PC-3 (cell line): ENCODE measurements at regions of chr10 and their contacts with region 1.

Region 1: GRCh38 chr10:103244663-103245271 is 920 bp upstream of the RPEL1 start:
- DNase-seq: peak; percentile 82
- ATAC-seq: peak; percentile 14; the same call in 1 of the 2 replicates
- H3K4me3 ChIP-seq: no peak overlapping the region
- H3K27ac ChIP-seq: no peak overlapping the region
- H3K4me1 ChIP-seq: peaks cover 26% of the 10 kb centered on the region
- H3K27me3 ChIP-seq: no peaks in the 10 kb centered on the region
- CTCF ChIP-seq: peak; percentile 86

Region 2: GRCh38 chr10:103080891-103081581 is 163.7 kb before region 1 on chr10:
- CTCF ChIA-PET with region 1: no interaction called
- POLR2A ChIA-PET with region 1: no interaction called
- intact Hi-C with region 1: loop called (anchors 5 kb)
- DNase-seq: peak; percentile 11
- ATAC-seq: peak; percentile 28; the same call in 1 of the 2 replicates
- H3K4me3 ChIP-seq: no peak overlapping the region
- H3K27ac ChIP-seq: no peak overlapping the region
- H3K4me1 ChIP-seq: no peaks in the 10 kb centered on the region
- H3K27me3 ChIP-seq: no peaks in the 10 kb centered on the region
- CTCF ChIP-seq: no peak

Region 3: GRCh38 chr10:103168486-103169311 is 76.1 kb before region 1 on chr10:
- CTCF ChIA-PET with region 1: interaction called, 8 read pairs
- POLR2A ChIA-PET with region 1: interaction called, 18 read pairs
- intact Hi-C with region 1: loop called (anchors 2 kb)
- DNase-seq: peak; percentile 81
- ATAC-seq: peak; percentile 94
- H3K4me3 ChIP-seq: peak overlapping the region; percentile 32; the same call in 1 of the 2 replicates
- H3K27ac ChIP-seq: peak overlapping the region; percentile 75
- H3K4me1 ChIP-seq: peaks cover 40% of the 10 kb centered on the region
- H3K27me3 ChIP-seq: no peaks in the 10 kb centered on the region
- CTCF ChIP-seq: no peak

Region 4: DNA sequence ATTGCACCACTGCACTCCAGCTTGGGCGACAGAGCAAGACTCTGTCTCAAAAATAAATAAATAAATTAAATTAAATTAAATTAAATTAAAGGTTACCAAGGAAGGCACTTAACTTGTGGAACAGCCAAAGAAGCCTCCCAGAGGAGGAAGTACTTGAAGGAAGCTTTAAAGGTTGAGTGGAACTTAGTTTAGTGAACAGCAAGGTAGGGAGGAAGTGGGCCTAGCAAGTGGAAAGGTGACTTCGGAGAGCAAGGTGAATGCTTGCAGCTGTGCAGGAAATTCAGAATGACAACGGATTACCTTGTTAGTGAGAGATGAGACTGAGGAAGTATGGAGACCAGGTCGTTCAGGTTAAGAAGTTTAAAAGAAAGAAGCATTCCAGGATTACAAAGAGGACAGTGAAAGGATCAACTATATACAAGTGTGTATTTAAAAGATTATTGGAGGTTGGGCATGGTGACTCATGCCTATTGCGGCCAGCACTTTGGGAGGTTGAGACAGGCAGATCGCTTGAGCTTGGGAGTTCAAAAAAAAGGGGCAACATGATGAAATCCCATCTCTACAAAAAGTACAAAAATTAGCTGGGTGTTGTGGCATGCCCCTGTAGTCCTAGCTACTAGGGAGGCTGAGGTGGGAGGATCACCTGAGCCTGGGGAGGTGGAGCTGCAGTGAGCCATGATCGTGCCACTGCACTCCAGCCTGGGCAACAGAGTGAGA is 11.8 kb before region 1 on chr10:
- CTCF ChIA-PET with region 1: no interaction called
- POLR2A ChIA-PET with region 1: interaction called, 7 read pairs
- intact Hi-C with region 1: loop called (anchors 1 kb)
- DNase-seq: peak; percentile 89
- ATAC-seq: peak; percentile 60
- H3K4me3 ChIP-seq: no peak overlapping the region
- H3K27ac ChIP-seq: peak overlapping the region; percentile 88
- H3K4me1 ChIP-seq: peaks cover 43% of the 10 kb centered on the region
- H3K27me3 ChIP-seq: no peaks in the 10 kb centered on the region
- CTCF ChIP-seq: no peak

Region 5: GRCh38 chr10:103262229-103262628 is 17.5 kb after region 1 on chr10:
- CTCF ChIA-PET with region 1: no interaction called
- POLR2A ChIA-PET with region 1: no interaction called
- intact Hi-C with region 1: no loop called
- DNase-seq: peak; percentile 3
- ATAC-seq: no peak
- H3K4me3 ChIP-seq: no peak overlapping the region
- H3K27ac ChIP-seq: no peak overlapping the region
- H3K4me1 ChIP-seq: no peaks in the 10 kb centered on the region
- H3K27me3 ChIP-seq: no peaks in the 10 kb centered on the region
- CTCF ChIP-seq: no peak

Region 6: GRCh38 chr10:103350175-103350500 is 105.4 kb after region 1 on chr10:
- CTCF ChIA-PET with region 1: no interaction called
- POLR2A ChIA-PET with region 1: interaction called, 12 read pairs
- intact Hi-C with region 1: no loop called
- DNase-seq: no peak
- ATAC-seq: no peak; the same call in 1 of the 2 replicates
- H3K4me3 ChIP-seq: peak overlapping the region; percentile 73
- H3K27ac ChIP-seq: no peak overlapping the region
- H3K4me1 ChIP-seq: peaks cover 4% of the 10 kb centered on the region; the same call in 1 of the 2 replicates
- H3K27me3 ChIP-seq: no peaks in the 10 kb centered on the region
- CTCF ChIP-seq: no peak